Breast epithelium (tissue), 4 donors: ENCODE measurements at regions of chr3 and their contacts with region 1.

Region 1: DNA sequence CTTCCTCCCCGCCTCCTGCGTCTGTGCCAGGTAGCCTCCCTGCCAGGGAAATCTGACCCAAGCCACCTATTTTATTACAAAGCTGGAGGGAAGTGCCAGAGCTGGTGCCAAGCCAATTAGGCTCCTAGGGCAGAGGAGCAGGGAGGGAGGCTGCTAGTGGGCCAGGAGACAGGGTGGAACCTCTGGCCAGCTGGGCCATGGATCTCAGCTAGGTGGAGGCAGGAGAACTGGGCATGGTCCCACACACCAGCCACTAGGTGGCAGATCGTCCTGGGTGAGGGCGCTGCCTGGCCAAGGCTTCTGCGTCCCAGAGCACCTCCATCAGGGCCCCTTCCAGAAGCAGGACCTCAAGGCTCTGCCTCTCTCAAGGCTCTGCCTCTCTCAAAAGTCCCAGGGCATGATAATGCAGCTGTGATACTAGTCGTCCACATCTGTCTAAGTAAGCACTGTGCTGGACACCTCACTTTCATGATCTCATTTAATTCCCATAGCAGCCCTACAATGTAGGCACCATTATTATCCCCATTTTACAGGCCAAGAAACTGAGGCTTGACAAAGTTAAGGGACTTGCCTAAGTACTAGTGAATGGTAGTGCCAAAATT is 4.5 kb upstream of the RFT1 start:
- DNase-seq: peak; percentile 77 to 86
- H3K4me3 ChIP-seq: no peak overlapping the region
- H3K27ac ChIP-seq: no peak overlapping the region
- H3K4me1 ChIP-seq: no peaks in the 10 kb centered on the region
- H3K27me3 ChIP-seq: no peaks in the 10 kb centered on the region
- CTCF ChIP-seq: peak; percentile 49 to 74 (median 72)
- POLR2A ChIP-seq: no peak

Region 2: DNA sequence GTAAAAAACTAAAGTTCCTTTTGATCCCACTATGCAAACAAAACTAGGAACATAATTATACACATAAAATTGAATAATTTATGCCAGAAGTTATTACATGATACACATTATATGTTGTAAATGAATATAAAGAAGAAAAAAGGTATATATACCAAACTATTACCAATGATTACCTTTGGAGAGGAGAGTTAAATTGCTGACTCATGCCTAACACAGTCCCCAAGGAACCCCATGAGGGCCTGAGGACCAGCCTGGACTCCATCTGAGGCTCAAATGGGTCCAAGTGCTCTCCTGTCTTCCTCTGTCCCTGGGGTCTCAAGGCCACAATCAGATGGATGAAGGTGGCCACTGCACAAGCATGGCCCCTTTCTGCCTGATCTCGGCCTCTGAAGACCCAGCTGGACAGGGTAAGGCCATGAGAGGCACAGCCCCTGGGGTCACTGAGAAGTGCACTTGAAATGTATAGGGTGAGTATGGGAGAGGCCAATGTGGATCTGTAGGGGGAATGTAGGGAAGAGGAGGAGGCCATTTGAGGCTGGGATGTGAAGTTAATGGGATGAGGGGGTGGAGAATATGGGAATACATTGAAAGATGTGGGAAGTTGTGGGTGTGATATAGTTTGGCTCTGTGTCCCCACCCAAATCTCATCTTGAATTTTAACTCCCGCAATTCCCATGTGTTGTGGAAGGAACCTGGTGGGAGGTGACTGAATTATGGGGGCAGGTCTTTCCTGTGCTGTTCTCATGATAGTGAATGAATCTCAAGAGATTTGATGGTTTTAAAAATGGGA is 1230.5 kb before region 1 on chr3:
- intact Hi-C with region 1: loop called (anchors 5 kb)
- DNase-seq: no peak
- H3K4me3 ChIP-seq: no peak overlapping the region
- H3K27ac ChIP-seq: no peak overlapping the region
- H3K4me1 ChIP-seq: no peaks in the 10 kb centered on the region
- H3K27me3 ChIP-seq: no peaks in the 10 kb centered on the region
- CTCF ChIP-seq: no peak
- POLR2A ChIP-seq: no peak

Region 3: GRCh38 chr3:52181543-52181942 is 953.2 kb before region 1 on chr3:
- intact Hi-C with region 1: no loop called
- DNase-seq: no peak
- H3K4me3 ChIP-seq: no peak overlapping the region
- H3K27ac ChIP-seq: peak overlapping the region; percentile 55 to 63
- H3K4me1 ChIP-seq: peaks cover 6 to 11% of the 10 kb centered on the region in 2 donors
- H3K27me3 ChIP-seq: no peaks in the 10 kb centered on the region
- CTCF ChIP-seq: no peak
- POLR2A ChIP-seq: no peak

Region 4: GRCh38 chr3:53160660-53161449 is 26.1 kb after region 1 on chr3 and contains the start of gene PRKCD:
- intact Hi-C with region 1: no loop called
- DNase-seq: peak; percentile 82 to 83
- H3K4me3 ChIP-seq: peak within 1 kb of the TSS; percentile 76 to 99 (median 92)
- H3K27ac ChIP-seq: peak within 1 kb of the TSS; percentile 83 to 94
- H3K4me1 ChIP-seq: peaks cover 7 to 20% of the 10 kb centered on the region in 2 donors
- H3K27me3 ChIP-seq: no peaks in the 10 kb centered on the region
- CTCF ChIP-seq: peak in 1 of 3 donors; percentile 50
- POLR2A ChIP-seq: peak; percentile 29
- total RNA-seq, gene PRKCD: 14.0 to 36.8 (median 15.1) TPM

Region 5: GRCh38 chr3:53182764-53183355 is 48.1 kb after region 1 on chr3:
- intact Hi-C with region 1: loop called (anchors 1 kb)
- DNase-seq: no peak
- H3K4me3 ChIP-seq: no peak overlapping the region
- H3K27ac ChIP-seq: no peak overlapping the region
- H3K4me1 ChIP-seq: no peaks in the 10 kb centered on the region
- H3K27me3 ChIP-seq: no peaks in the 10 kb centered on the region
- CTCF ChIP-seq: no peak
- POLR2A ChIP-seq: no peak